CD4-positive, alpha-beta memory T cell (primary cell): ENCODE measurements at regions of chr16 and their contacts with region 1.

Region 1: GRCh38 chr16:57485916-57486857 is at the start of gene DOK4:
- DNase-seq: peak; percentile 65 to 72 (median 69)
- H3K4me3 ChIP-seq: peak within 1 kb of the TSS in 1 of 2 donors; percentile 55
- H3K4me3 Mint-ChIP-seq: peak within 1 kb of the TSS; percentile 82 to 90 (median 86)
- H3K27ac ChIP-seq: peak within 1 kb of the TSS; percentile 36
- H3K27ac Mint-ChIP-seq: peak within 1 kb of the TSS in 5 of 7 donors; percentile 44 to 81 (median 77)
- H3K4me1 ChIP-seq: peaks cover 17% of the 10 kb centered on the region
- H3K4me1 Mint-ChIP-seq: peaks cover 11 to 27% (median 21%) of the 10 kb centered on the region in 4 donors
- H3K27me3 ChIP-seq: no peaks in the 10 kb centered on the region
- H3K27me3 Mint-ChIP-seq: no peaks in the 10 kb centered on the region
- total RNA-seq, gene DOK4: 2.8 to 3.0 TPM

Region 2: DNA sequence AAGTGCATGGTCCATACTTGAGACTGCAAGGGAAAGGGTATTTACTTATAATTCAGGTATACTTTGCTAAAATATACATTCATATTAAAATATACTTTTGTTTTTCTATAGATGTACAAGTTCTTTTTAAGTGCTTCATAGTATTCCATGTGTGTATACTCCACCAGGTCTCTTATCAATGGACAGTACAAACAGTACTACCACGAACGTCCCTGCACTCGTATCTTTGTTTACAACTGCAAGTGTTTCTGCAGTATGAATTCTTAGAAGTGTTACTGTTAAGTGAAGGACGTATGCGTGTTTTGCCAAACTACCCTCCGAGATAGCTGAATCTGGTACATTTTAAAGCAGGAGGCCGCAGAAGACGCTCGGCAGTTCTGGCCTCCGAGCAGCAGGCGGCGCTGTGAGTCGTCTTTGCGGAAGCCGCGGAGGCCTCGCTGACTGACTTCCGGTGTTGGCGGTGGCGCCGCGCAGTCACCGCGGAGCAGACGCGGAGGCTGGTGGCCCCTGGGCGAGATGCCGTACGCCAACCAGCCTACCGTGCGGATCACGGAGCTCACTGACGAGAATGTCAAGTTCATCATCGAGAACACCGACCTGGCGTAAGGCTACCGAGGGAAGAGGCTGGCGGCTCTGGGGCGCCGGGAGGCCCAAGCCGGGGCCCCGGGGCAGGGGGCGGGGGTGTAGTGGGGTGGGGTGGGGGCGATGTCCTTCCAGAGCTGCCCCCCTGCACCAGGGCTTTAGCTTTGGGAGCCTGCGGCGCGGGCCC is 23.8 kb before region 1 on chr16 and contains the start of gene POLR2C:
- CTCF ChIA-PET with region 1: interaction called, 9 read pairs
- POLR2A ChIA-PET with region 1: interaction called, 16 read pairs
- intact Hi-C with region 1: no loop called
- DNase-seq: peak; percentile 89 to 93 (median 90)
- H3K4me3 ChIP-seq: peak within 1 kb of the TSS; percentile 81 to 87
- H3K4me3 Mint-ChIP-seq: peak within 1 kb of the TSS; percentile 98 to 100 (median 100)
- H3K27ac ChIP-seq: peak within 1 kb of the TSS; percentile 69
- H3K27ac Mint-ChIP-seq: peak within 1 kb of the TSS; percentile 96 to 100 (median 99)
- H3K4me1 ChIP-seq: peaks cover 36% of the 10 kb centered on the region
- H3K4me1 Mint-ChIP-seq: peaks cover 16 to 43% (median 34%) of the 10 kb centered on the region in 4 donors
- H3K27me3 ChIP-seq: no peaks in the 10 kb centered on the region
- H3K27me3 Mint-ChIP-seq: no peaks in the 10 kb centered on the region
- total RNA-seq, gene POLR2C: 71.4 to 78.1 TPM

Region 3: GRCh38 chr16:57475711-57476339 is 10.4 kb before region 1 on chr16:
- CTCF ChIA-PET with region 1: interaction called, 7 read pairs
- POLR2A ChIA-PET with region 1: interaction called, 4 read pairs
- intact Hi-C with region 1: loop called (anchors 1 kb)
- DNase-seq: peak; percentile 66 to 82 (median 75)
- H3K4me3 ChIP-seq: no peak overlapping the region
- H3K4me3 Mint-ChIP-seq: peak overlapping the region in 5 of 8 donors; percentile 5 to 69 (median 59)
- H3K27ac ChIP-seq: no peak overlapping the region
- H3K27ac Mint-ChIP-seq: peak overlapping the region in 4 of 7 donors; percentile 74 to 79 (median 76)
- H3K4me1 ChIP-seq: peaks cover 17% of the 10 kb centered on the region
- H3K4me1 Mint-ChIP-seq: peaks cover 7 to 12% (median 10%) of the 10 kb centered on the region in 4 donors
- H3K27me3 ChIP-seq: no peaks in the 10 kb centered on the region
- H3K27me3 Mint-ChIP-seq: no peaks in the 10 kb centered on the region

Region 4: GRCh38 chr16:57535680-57536305 is 49.6 kb after region 1 on chr16:
- CTCF ChIA-PET with region 1: interaction called, 16 read pairs
- POLR2A ChIA-PET with region 1: interaction called, 31 read pairs
- intact Hi-C with region 1: loop called (anchors 1 kb)
- DNase-seq: peak; percentile 89 to 95 (median 93)
- H3K4me3 ChIP-seq: peak overlapping the region in 1 of 2 donors; percentile 51
- H3K4me3 Mint-ChIP-seq: peak overlapping the region; percentile 80 to 91 (median 83)
- H3K27ac ChIP-seq: peak overlapping the region; percentile 92
- H3K27ac Mint-ChIP-seq: peak overlapping the region; percentile 96 to 99 (median 98)
- H3K4me1 ChIP-seq: peaks cover 76% of the 10 kb centered on the region
- H3K4me1 Mint-ChIP-seq: peaks cover 60 to 76% (median 69%) of the 10 kb centered on the region in 4 donors
- H3K27me3 ChIP-seq: no peaks in the 10 kb centered on the region
- H3K27me3 Mint-ChIP-seq: no peaks in the 10 kb centered on the region

Region 5: GRCh38 chr16:57663917-57664661 is 177.9 kb after region 1 on chr16:
- CTCF ChIA-PET with region 1: no interaction called
- POLR2A ChIA-PET with region 1: no interaction called
- intact Hi-C with region 1: no loop called
- DNase-seq: no peak
- H3K4me3 ChIP-seq: no peak overlapping the region
- H3K4me3 Mint-ChIP-seq: no peak overlapping the region
- H3K27ac ChIP-seq: no peak overlapping the region
- H3K27ac Mint-ChIP-seq: no peak overlapping the region
- H3K4me1 ChIP-seq: no peaks in the 10 kb centered on the region
- H3K4me1 Mint-ChIP-seq: no peaks in the 10 kb centered on the region
- H3K27me3 ChIP-seq: no peaks in the 10 kb centered on the region
- H3K27me3 Mint-ChIP-seq: peaks cover 0 to 1% of the 10 kb centered on the region in 2 donors